PC-3 (cell line): ENCODE measurements at regions of chr1 and their contacts with region 1.

Region 1: DNA sequence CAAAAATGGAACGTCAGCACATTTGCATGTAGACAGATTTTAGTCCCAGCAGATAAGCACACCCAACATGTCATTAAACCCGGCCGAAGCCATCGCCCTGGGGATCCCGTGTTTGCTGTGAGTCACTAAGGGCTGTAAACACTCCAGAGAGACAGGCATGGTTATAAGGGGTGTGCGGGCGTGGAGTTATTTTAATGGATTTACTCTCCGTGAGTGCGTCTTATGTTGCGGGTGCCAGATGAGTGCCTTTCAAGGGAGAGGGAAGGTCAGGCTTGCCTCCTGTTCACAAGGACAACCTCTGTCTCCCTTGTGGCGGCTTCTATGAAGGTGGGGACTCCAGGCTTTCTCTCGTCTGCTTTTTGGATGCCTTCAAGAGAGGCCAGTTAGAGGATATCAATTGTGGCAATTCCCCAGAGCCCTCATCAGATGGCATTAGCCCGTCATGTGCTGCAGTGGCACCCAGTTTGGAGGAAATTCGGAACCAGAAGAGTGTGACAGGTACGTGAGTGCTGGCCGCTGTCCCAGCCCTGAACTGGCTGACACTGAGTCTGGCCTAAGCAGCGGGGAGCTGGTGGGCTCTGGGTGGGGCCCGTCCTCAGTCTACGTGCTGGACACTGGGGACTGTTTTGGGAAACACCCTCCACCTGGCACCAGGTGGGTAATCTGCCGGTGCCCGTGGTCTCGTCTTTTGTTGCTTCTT is 223.8 kb upstream of the TMEM51 start:
- DNase-seq: peak; percentile 74
- ATAC-seq: peak; percentile 91
- H3K4me3 ChIP-seq: no peak overlapping the region
- H3K27ac ChIP-seq: no peak overlapping the region
- H3K4me1 ChIP-seq: peaks cover 14% of the 10 kb centered on the region
- H3K27me3 ChIP-seq: peaks cover 16% of the 10 kb centered on the region
- CTCF ChIP-seq: no peak

Region 2: GRCh38 chr1:14996133-14997050 is 66.7 kb after region 1 on chr1:
- CTCF ChIA-PET with region 1: no interaction called
- POLR2A ChIA-PET with region 1: no interaction called
- intact Hi-C with region 1: no loop called
- DNase-seq: peak; percentile 50
- ATAC-seq: peak; percentile 57
- H3K4me3 ChIP-seq: no peak overlapping the region
- H3K27ac ChIP-seq: no peak overlapping the region
- H3K4me1 ChIP-seq: peaks cover 8% of the 10 kb centered on the region; the same call in 1 of the 2 replicates
- H3K27me3 ChIP-seq: no peaks in the 10 kb centered on the region
- CTCF ChIP-seq: no peak

Region 3: GRCh38 chr1:15028102-15028501 is 98.4 kb after region 1 on chr1:
- CTCF ChIA-PET with region 1: no interaction called
- POLR2A ChIA-PET with region 1: no interaction called
- intact Hi-C with region 1: loop called (anchors 1 kb)
- DNase-seq: peak; percentile 52
- ATAC-seq: peak; percentile 54
- H3K4me3 ChIP-seq: no peak overlapping the region
- H3K27ac ChIP-seq: no peak overlapping the region
- H3K4me1 ChIP-seq: peaks cover 8% of the 10 kb centered on the region; the same call in 1 of the 2 replicates
- H3K27me3 ChIP-seq: no peaks in the 10 kb centered on the region
- CTCF ChIP-seq: no peak

Region 4: DNA sequence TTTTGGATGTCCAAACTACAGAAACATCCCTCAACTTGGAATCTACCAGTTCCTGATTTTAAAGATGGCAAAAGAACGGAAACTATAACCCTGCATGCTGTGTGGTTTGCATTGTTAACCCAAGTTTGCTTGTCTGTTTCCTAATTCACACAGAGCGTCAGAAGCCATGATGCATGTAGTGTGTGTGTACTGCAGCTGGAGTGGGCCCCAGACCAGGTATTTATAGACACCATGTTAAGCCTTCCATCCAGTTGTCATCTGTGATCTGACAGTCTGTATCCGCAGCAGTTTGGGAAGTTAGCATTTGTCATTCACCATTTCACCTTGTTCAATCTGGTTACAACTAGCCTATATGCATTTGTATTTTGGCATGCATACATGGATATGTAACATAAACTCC is 726.8 kb after region 1 on chr1:
- CTCF ChIA-PET with region 1: no interaction called
- POLR2A ChIA-PET with region 1: no interaction called
- intact Hi-C with region 1: no loop called
- DNase-seq: no peak
- ATAC-seq: no peak
- H3K4me3 ChIP-seq: no peak overlapping the region
- H3K27ac ChIP-seq: no peak overlapping the region
- H3K4me1 ChIP-seq: no peaks in the 10 kb centered on the region
- H3K27me3 ChIP-seq: no peaks in the 10 kb centered on the region
- CTCF ChIP-seq: no peak